Endothelial cell of umbilical vein (primary cell): ENCODE measurements at regions of chr5 and their contacts with region 1.

Region 1: GRCh38 chr5:132007399-132008165 is 3.9 kb downstream of the ACSL6 start:
- DNase-seq: peak; percentile 78
- H3K4me3 ChIP-seq: no peak overlapping the region
- H3K27ac ChIP-seq: no peak overlapping the region
- H3K4me1 ChIP-seq: no peaks in the 10 kb centered on the region
- H3K27me3 ChIP-seq: peaks cover 17 to 21% of the 10 kb centered on the region in 2 experiments
- CTCF ChIP-seq: peak; percentile 66 to 74
- POLR2A ChIP-seq: no peak

Region 2: DNA sequence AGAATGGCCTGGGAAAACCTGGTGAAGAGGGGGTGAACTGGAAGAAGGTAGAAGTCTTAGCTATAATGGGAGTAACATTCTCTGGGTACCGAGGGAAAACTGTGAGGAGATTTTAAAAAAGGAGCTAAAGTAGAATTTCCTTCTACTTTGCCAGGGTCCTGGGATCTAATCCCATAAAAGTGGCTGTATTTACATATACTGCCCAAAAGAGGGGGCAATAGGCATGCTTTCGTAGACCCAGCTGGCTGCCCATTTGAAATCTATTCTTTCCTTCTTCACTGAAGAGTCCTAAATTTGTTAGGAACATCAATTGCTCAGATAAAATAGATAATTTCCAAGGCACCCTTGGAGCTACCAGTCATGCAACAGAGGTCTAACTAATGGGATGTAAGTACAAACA is 584.5 kb before region 1 on chr5:
- CTCF ChIA-PET with region 1: interaction called, 121 read pairs
- POLR2A ChIA-PET with region 1: no interaction called
- dilution Hi-C with region 1: no loop called
- intact Hi-C with region 1: loop called (anchors 1 kb)
- DNase-seq: peak; percentile 46
- H3K4me3 ChIP-seq: no peak overlapping the region
- H3K27ac ChIP-seq: no peak overlapping the region
- H3K4me1 ChIP-seq: no peaks in the 10 kb centered on the region
- H3K27me3 ChIP-seq: no peaks in the 10 kb centered on the region
- CTCF ChIP-seq: peak; percentile 47 to 56
- POLR2A ChIP-seq: no peak

Region 3: GRCh38 chr5:131610198-131611063 is 397.2 kb before region 1 on chr5:
- CTCF ChIA-PET with region 1: interaction called, 10 read pairs
- POLR2A ChIA-PET with region 1: no interaction called
- dilution Hi-C with region 1: no loop called
- intact Hi-C with region 1: no loop called
- DNase-seq: peak; percentile 87
- H3K4me3 ChIP-seq: no peak overlapping the region
- H3K27ac ChIP-seq: peak overlapping the region; percentile 68
- H3K4me1 ChIP-seq: peaks cover 13% of the 10 kb centered on the region
- H3K27me3 ChIP-seq: no peaks in the 10 kb centered on the region
- CTCF ChIP-seq: no peak
- POLR2A ChIP-seq: no peak

Region 4: DNA sequence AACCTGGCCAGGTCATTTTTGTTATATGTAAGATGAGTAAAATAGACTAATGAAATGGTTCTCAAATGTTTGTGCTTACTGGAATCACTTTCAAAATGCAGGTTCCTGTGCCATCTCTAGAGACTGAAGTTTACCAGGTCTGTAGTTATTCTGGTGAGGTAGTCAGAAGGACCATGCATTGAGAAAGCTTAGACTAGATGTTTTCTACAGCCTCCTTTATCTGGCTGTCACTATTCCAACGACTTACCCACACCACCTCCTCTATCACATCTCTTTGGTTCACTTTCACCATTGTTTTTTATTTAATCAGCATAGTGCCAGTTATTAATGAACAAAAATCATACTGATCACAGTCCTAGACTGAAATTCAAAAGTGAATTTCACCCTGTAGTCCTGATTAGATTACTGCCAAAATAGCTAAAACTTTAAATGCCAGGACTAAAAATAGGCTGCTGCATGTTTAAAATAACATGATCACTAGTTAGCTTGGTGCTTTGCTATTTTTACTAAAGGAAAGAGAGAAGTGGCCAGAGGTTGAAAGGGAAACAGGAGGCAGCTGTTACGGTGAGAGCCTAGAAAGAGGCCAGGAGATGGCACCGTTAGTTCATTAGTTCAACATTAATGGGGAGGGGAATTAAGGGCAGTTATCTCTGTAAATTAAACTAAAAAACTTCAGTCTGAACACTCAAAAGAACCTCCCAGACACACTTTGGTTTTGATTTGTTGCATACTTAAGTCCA is 196.9 kb before region 1 on chr5:
- CTCF ChIA-PET with region 1: interaction called, 34 read pairs
- POLR2A ChIA-PET with region 1: no interaction called
- dilution Hi-C with region 1: no loop called
- intact Hi-C with region 1: loop called (anchors 1 kb)
- DNase-seq: peak; percentile 27
- H3K4me3 ChIP-seq: no peak overlapping the region
- H3K27ac ChIP-seq: no peak overlapping the region
- H3K4me1 ChIP-seq: peaks cover 21% of the 10 kb centered on the region
- H3K27me3 ChIP-seq: no peaks in the 10 kb centered on the region
- CTCF ChIP-seq: peak; percentile 4 to 8
- POLR2A ChIP-seq: no peak

Region 5: GRCh38 chr5:132073231-132074013 is 65.8 kb after region 1 on chr5 and contains the start of gene CSF2:
- CTCF ChIA-PET with region 1: no interaction called
- POLR2A ChIA-PET with region 1: no interaction called
- dilution Hi-C with region 1: no loop called
- intact Hi-C with region 1: no loop called
- DNase-seq: peak; percentile 55
- H3K4me3 ChIP-seq: no peak within 1 kb of the TSS
- H3K27ac ChIP-seq: no peak within 1 kb of the TSS
- H3K4me1 ChIP-seq: peaks cover 26% of the 10 kb centered on the region
- H3K27me3 ChIP-seq: no peaks in the 10 kb centered on the region
- CTCF ChIP-seq: no peak
- POLR2A ChIP-seq: no peak
- total RNA-seq, gene CSF2: not detected in 2 replicates